Heart left ventricle (tissue), 16 donors: ENCODE measurements at regions of chr1 and their contacts with region 1.

Region 1: DNA sequence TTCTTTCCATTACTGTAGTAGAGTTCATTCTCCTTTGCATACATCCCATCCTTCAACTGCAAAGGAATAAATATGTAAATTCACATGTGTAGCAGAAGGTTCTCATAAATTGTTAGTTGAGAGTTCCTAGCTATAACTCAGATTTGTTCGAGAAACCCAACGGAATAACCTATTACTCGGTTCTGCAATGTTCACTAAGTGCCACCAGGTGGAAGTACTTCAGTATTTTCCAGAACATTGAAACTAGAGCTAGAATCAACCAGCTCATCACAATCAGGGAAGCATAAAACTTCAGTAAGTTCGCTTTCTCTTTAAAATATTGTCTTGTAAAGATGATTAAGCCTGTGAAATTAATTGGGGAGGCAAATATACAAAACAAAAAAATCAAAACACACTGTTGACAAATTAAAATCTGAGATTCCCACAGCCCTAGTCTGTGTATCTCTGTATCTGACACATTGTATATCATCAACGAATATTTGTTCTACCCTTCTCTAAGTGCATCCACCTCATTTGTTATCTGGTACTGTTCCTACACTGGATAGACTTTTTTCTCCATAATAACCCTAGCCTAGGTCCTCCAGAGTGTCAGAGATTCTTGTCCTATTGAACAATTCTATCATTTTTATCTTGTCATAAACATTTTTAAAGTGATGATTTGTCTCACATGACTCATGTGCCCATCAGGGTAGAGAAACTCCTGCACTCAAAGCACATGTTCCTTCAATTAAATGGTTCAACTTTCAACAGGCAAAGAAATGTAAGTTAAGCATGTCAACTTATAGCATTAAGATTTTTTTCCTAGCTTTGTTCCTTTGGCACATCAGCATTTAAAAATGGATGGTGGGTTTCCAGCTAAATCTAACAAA is 31.9 kb downstream of the MROH9 start:
- DNase-seq: peak in 1 of 5 donors; percentile 6
- ATAC-seq: peak in 2 of 4 donors; percentile 63 to 69
- H3K4me3 ChIP-seq: peak overlapping the region in 1 of 12 donors; percentile 17
- H3K27ac ChIP-seq: no peak overlapping the region
- H3K4me1 ChIP-seq: peaks cover 0 to 4% (median 0%) of the 10 kb centered on the region in 12 donors
- H3K27me3 ChIP-seq: no peaks in the 10 kb centered on the region
- CTCF ChIP-seq: peak; percentile 52 to 79 (median 68)
- POLR2A ChIP-seq: no peak

Region 2: DNA sequence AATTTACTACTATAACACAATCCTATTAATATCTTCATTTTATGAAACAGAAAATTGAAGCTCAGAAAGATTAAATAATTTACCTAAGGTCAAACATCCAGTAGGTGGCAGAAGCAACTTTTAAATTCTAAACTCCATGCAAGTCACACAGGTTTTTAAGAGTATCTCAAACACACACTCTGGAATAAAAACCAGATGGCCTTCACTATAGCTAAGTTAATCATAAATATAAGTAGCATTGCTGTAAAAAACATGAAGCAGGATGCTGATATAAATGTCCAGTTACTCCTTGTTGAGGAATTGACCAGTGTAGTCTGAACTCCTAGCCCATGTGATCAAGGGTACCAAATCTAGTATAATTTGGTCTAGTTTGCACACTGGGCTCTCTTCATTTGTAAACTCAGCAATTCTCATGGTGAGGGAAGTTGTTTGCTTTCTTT is 114.1 kb after region 1 on chr1:
- intact Hi-C with region 1: loop called in 2 of 10 experiments (anchors 2 to 10 kb)
- DNase-seq: no peak
- ATAC-seq: peak in 2 of 4 donors; percentile 46 to 50
- H3K4me3 ChIP-seq: peak overlapping the region in 1 of 12 donors; percentile 4
- H3K27ac ChIP-seq: peak overlapping the region in 9 of 12 donors; percentile 13 to 76 (median 51)
- H3K4me1 ChIP-seq: peaks cover 0 to 29% (median 9%) of the 10 kb centered on the region in 12 donors
- H3K27me3 ChIP-seq: no peaks in the 10 kb centered on the region
- CTCF ChIP-seq: peak; percentile 36 to 71 (median 62)
- POLR2A ChIP-seq: no peak

Region 3: DNA sequence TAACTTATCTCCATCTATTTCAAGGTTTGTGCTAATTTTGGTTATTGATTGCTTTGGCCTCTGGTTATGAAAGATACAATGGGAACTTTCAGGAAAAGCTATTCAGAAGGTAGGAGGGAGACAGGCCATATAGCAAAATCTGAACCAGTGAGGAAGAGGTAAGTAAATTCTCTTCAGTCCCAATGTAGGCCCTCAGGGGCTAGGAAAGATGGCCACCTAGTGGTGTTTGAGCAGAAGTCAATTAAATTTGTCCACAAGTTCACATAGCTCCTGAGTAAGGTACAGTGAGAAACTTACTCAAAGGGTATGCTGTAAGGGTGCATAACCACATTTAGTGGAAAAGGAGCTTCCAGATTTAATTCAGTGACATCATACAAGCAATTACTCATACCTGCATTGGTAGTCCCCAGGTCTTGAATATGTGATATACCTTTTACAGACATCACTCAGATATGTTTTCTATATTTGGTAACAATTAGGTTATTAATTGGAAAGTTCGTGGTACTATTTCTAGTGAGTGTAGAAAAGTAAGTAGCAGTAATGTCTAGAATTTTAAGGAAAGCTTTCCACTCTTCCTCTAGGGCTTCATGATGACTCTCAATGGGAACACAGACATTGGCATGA is 259.6 kb after region 1 on chr1:
- intact Hi-C with region 1: loop called (anchors 2 to 5 kb)
- DNase-seq: peak in 4 of 5 donors; percentile 34 to 49 (median 40)
- ATAC-seq: peak in 3 of 4 donors; percentile 76 to 81 (median 78)
- H3K4me3 ChIP-seq: no peak overlapping the region
- H3K27ac ChIP-seq: no peak overlapping the region
- H3K4me1 ChIP-seq: peaks cover 0 to 25% (median 12%) of the 10 kb centered on the region in 12 donors
- H3K27me3 ChIP-seq: no peaks in the 10 kb centered on the region
- CTCF ChIP-seq: peak; percentile 75 to 94 (median 82)
- POLR2A ChIP-seq: no peak